Left ventricle myocardium inferior (tissue), 1 donor: ENCODE measurements at regions of chr10 and their contacts with region 1.

Region 1: GRCh38 chr10:80444646-80445319 is 9.3 kb upstream of the TSPAN14 start:
- DNase-seq: peak; percentile 60
- H3K4me3 ChIP-seq: no peak overlapping the region
- H3K27ac ChIP-seq: peak overlapping the region; percentile 45
- H3K4me1 ChIP-seq: peaks cover 28% of the 10 kb centered on the region
- H3K27me3 ChIP-seq: no peaks in the 10 kb centered on the region
- CTCF ChIP-seq: peak; percentile 90

Region 2: DNA sequence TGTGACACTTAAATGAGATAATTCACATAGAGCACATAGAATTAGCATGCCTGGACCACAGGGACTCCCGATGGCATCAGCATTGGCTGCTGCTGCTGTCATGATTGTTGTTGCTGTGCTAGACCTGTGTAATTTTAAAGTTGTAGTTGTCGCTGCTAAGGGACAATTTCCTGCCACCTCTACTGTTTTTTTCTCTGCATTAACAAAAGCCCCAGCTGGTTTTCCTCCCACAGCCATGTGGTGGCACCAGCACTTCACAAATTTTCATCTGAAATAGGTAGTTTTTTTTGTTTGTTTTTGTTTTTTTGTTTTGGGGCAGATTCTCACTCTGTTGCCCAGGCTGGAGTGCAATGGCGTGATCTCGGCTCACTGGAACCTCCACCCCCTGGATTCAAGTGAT is 61.8 kb before region 1 on chr10:
- intact Hi-C with region 1: no loop called
- DNase-seq: no peak
- H3K4me3 ChIP-seq: no peak overlapping the region
- H3K27ac ChIP-seq: no peak overlapping the region
- H3K4me1 ChIP-seq: peaks cover 13% of the 10 kb centered on the region
- H3K27me3 ChIP-seq: no peaks in the 10 kb centered on the region
- CTCF ChIP-seq: peak; percentile 80

Region 3: GRCh38 chr10:80509403-80510161 is 64.8 kb after region 1 on chr10:
- intact Hi-C with region 1: loop called (anchors 5 kb)
- DNase-seq: peak; percentile 43
- H3K4me3 ChIP-seq: peak overlapping the region; percentile 27
- H3K27ac ChIP-seq: peak overlapping the region; percentile 91
- H3K4me1 ChIP-seq: peaks cover 94% of the 10 kb centered on the region
- H3K27me3 ChIP-seq: no peaks in the 10 kb centered on the region
- CTCF ChIP-seq: no peak